Activated T-helper 2 cell treated with anti-CD3 and anti-CD28 coated beads, Interferon-gamma antibody, Interleukin-2, Interleukin-4, amounts not matched to agents 10 μg/mL and 5 μg/mL and 100 μg/mL, durations not matched to agents 14 hours and 24 hours and 36 hours (primary cell): ENCODE measurements at regions of chr3 and their contacts with region 1.

Region 1: DNA sequence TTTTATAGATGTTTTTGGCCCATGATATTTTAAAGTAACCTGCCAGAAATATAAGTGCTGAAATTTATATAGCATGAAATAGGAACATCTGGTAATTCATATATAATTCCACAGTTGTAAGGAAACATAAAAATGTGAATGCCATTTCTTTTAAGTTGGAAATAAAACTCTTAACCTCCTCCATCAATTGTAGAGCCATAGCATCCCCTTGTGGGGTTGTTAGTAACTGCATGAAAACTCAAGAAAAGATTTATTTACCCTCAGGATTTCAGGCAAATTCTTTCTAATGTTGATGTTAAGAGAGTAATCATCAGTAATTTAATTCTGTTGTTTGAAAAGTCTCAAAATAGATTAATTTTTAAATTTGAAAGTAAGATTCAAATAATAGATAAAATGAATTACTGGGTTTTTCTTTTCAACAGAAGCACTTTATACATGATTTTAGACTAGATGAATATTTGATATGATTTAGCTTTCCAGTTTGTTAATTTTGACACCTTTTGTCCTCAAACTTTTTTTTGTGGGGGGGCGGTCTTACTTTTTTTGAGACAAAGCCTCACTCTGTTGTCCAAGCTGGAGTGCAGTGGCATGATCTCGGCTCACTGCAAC is 74.7 kb downstream of the RASA2 start:
- DNase-seq: no peak
- H3K4me3 Mint-ChIP-seq: no peak overlapping the region
- H3K27ac Mint-ChIP-seq: no peak overlapping the region
- H3K4me1 Mint-ChIP-seq: peaks cover 12% of the 10 kb centered on the region
- H3K27me3 Mint-ChIP-seq: no peaks in the 10 kb centered on the region

Region 2: DNA sequence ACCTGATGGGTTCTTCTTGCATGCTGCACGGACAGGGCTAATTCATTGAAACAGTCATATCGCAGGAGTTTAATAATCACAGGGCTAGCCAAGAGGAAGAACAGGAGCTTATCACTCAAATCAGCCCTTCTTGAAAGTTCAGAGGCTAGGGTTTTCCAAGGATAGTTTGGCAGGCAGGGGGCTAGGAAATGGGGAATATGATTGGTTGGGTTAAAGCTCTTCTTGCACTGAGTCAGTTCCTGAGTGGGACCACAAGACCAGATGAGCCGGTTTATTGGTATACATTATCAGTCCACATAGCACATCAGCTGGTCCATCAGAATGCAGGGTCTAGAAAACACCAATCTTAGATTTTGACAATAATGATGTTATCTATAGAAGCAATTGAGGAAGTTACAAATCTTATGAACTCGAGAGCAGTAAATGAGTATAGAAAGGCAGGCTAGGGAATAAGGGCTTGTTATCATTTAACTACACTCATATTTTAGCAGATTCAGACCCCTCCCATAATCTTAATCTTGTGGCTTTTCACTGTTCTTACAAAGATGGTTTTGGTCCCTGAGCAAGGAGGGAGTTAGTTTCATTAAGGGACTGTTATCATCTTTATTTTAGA is 678.0 kb before region 1 on chr3:
- intact Hi-C with region 1: no loop called
- DNase-seq: no peak
- H3K4me3 Mint-ChIP-seq: no peak overlapping the region
- H3K27ac Mint-ChIP-seq: no peak overlapping the region
- H3K4me1 Mint-ChIP-seq: peaks cover 8% of the 10 kb centered on the region
- H3K27me3 Mint-ChIP-seq: peaks cover 5% of the 10 kb centered on the region

Region 3: GRCh38 chr3:141303481-141304223 is 257.9 kb before region 1 on chr3:
- intact Hi-C with region 1: loop called (anchors 2 kb)
- DNase-seq: peak; percentile 49
- H3K4me3 Mint-ChIP-seq: no peak overlapping the region
- H3K27ac Mint-ChIP-seq: no peak overlapping the region
- H3K4me1 Mint-ChIP-seq: peaks cover 42% of the 10 kb centered on the region
- H3K27me3 Mint-ChIP-seq: no peaks in the 10 kb centered on the region

Region 4: DNA sequence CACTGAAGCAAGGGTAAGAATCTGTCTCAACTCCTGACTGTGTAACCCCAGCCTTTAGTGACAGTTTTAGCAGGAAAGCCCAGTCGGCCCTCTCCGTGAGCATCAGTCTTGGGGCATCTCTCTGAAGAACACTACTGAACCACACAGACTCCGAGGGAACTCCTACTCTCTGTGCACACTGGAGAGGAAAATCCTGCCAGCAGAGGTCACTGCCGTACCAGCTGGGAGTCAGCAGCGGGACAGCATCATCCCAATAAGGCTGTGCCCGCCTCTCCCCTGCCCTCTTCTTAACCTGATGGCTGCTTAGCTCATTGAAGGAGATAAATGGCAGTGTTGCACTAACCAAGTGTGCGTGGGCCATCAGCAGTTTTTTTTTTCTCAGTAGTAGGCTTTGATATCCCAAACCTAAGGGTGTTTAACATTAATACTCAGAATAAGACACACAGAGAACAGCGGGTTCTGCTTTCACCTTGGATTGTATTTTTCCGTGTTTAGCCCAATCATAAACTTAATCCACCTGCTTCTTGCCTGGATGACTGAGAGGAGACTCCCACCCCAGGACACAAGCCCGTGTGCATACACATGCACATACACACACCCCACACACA is 101.3 kb before region 1 on chr3:
- intact Hi-C with region 1: loop called (anchors 1 kb)
- DNase-seq: peak; percentile 77
- H3K4me3 Mint-ChIP-seq: no peak overlapping the region
- H3K27ac Mint-ChIP-seq: no peak overlapping the region
- H3K4me1 Mint-ChIP-seq: peaks cover 15% of the 10 kb centered on the region
- H3K27me3 Mint-ChIP-seq: peaks cover 1% of the 10 kb centered on the region

Region 5: DNA sequence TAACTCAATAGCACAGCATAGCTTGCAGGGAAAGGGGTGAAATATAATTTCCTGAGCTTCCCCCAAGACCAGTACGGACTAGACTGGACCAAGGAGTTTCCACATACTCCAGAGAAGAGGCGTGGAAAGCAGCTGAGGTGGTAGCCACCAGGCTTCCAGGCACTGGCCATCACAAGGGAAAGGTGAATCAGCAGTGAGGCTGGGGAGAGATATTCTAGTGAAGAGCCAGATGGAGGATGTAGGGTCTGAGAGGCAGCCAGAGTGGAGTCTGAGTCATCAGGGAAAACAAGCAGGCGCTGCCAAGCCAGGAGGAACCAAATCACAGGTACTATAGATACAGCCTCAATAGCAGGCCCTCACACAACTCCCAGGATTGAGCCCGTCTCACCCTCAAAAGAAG is 84.3 kb before region 1 on chr3:
- intact Hi-C with region 1: loop called (anchors 1 kb)
- DNase-seq: no peak
- H3K4me3 Mint-ChIP-seq: no peak overlapping the region
- H3K27ac Mint-ChIP-seq: no peak overlapping the region
- H3K4me1 Mint-ChIP-seq: peaks cover 23% of the 10 kb centered on the region
- H3K27me3 Mint-ChIP-seq: peaks cover 10% of the 10 kb centered on the region